Activated T-helper 2 cell treated with anti-CD3 and anti-CD28 coated beads, Interferon-gamma antibody, Interleukin-2, Interleukin-4, amounts not matched to agents 10 μg/mL and 5 μg/mL and 100 μg/mL, durations not matched to agents 14 hours and 24 hours and 36 hours (primary cell): ENCODE measurements at regions of chr3 and their contacts with region 1.

Region 1: DNA sequence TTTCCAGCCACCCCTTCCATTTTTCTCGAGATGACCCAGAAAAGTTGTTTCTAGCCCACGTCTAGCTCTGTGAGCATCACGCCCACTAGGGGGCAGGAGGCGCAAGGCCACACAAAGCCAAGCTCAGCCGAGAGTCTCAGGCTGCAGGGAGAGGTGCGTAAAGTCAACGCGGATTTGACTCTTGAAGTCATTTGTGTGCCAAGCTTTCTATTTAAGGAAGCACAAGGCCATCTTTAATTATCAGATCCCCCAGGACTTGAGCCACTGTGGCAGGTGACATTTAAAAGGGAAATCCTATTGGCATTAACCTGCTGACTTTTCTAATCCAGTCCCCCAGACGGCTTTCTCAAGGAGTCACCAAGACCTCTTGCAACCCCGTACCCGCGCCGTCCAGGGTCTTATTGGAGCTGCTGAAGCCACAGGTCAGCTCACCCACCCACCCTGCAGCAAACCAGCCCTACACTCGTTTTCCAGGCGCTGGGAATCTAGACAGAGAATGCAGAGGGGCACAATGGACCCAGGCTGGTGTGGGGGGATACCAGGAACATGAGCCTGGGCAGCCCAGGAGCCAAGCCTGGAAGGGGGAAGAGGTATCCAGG is 62.1 kb downstream of the CAPN7 start:
- DNase-seq: peak; percentile 75
- H3K4me3 Mint-ChIP-seq: no peak overlapping the region
- H3K27ac Mint-ChIP-seq: no peak overlapping the region
- H3K4me1 Mint-ChIP-seq: peaks cover 41% of the 10 kb centered on the region
- H3K27me3 Mint-ChIP-seq: no peaks in the 10 kb centered on the region

Region 2: GRCh38 chr3:15241341-15241740 is 26.8 kb before region 1 on chr3:
- intact Hi-C with region 1: no loop called
- DNase-seq: no peak
- H3K4me3 Mint-ChIP-seq: no peak overlapping the region
- H3K27ac Mint-ChIP-seq: no peak overlapping the region
- H3K4me1 Mint-ChIP-seq: peaks cover 10% of the 10 kb centered on the region
- H3K27me3 Mint-ChIP-seq: no peaks in the 10 kb centered on the region

Region 3: GRCh38 chr3:15291589-15292541 is 23.7 kb after region 1 on chr3:
- intact Hi-C with region 1: loop called (anchors 1 kb)
- DNase-seq: peak; percentile 69
- H3K4me3 Mint-ChIP-seq: peak overlapping the region; percentile 31
- H3K27ac Mint-ChIP-seq: peak overlapping the region; percentile 74
- H3K4me1 Mint-ChIP-seq: peaks cover 50% of the 10 kb centered on the region
- H3K27me3 Mint-ChIP-seq: no peaks in the 10 kb centered on the region

Region 4: GRCh38 chr3:15332405-15333098 is 64.4 kb after region 1 on chr3 and contains the start of gene SH3BP5:
- intact Hi-C with region 1: loop called (anchors 1 kb)
- DNase-seq: peak; percentile 68
- H3K4me3 Mint-ChIP-seq: peak within 1 kb of the TSS; percentile 90
- H3K27ac Mint-ChIP-seq: peak within 1 kb of the TSS; percentile 77
- H3K4me1 Mint-ChIP-seq: peaks cover 45% of the 10 kb centered on the region
- H3K27me3 Mint-ChIP-seq: peaks cover 2% of the 10 kb centered on the region
- total RNA-seq, gene SH3BP5: 14.8 and 15.0 TPM in 2 replicates

Region 5: DNA sequence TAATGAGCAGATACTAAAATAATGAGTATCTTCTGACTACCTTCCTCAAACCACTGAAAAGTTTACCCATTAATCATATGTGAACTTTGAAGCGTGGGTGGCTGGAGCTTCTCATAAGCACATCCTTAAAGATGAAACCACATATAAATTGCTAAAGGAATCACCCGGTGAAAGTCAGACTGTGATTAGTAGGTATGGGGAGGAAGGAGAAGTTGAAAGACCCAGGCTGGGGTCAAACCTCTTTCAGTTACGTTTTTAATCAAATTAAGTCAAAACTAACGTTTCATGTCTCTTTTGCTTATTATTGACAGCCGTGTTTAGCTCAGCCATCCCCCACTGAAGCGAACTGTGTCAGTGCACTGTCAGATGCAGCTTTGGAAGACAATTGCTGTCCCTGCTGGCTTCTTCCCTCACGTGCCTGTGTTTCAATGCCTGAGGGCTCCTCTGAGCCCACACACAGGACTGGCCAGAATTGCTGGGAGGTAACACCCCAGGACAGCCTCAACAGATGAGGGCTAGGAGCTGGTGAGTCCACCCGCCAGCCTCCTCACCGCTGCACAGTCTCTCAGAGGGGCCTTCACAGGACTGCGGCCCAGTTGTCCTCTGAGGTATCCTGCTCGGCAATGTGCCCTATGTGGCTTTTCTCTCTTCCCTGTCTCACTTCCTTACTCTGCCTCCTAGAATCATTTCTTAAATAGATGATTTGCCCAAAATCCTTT is 93.5 kb after region 1 on chr3:
- intact Hi-C with region 1: loop called (anchors 1 kb)
- DNase-seq: peak; percentile 36
- H3K4me3 Mint-ChIP-seq: peak overlapping the region; percentile 30
- H3K27ac Mint-ChIP-seq: peak overlapping the region; percentile 81
- H3K4me1 Mint-ChIP-seq: peaks cover 36% of the 10 kb centered on the region
- H3K27me3 Mint-ChIP-seq: no peaks in the 10 kb centered on the region

Region 6: DNA sequence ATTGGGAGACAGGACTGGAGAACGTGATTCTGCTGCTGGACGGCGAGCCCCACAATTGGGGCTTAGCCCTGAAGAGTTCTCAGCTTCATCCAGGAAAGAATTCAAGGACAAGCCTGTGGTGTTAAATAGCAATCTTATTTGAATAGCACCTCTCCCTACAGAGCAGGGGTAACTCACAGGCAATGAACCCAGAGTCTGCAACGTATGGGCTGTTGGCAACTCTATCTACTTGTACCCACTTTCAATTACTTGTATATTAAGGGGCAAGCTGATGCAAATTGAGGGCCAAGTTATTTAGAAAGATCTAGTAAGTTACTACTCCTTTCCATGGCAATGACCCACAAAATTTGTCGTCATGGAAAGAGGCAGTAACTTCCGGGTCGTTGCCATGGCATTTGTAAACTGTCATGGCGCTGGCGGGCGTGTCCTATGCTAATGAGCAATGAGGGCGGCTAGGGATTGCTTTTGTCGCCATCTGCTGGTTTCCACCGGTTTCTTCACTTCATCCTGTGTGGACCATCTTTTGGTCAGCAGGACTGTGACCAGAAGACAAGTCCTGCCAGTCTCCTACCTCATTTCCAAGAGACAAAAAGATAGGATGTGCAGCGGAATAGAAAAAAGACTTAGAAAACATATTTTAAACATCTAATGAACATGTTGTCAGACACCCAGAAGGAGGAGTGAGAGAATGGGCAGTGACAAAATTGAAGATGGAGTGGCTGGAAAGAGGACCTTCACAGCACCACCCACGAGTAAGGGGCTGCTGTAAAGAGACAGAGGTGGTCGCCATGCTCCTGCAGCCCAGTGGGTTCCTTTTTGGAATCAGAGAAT is 110.0 kb after region 1 on chr3:
- intact Hi-C with region 1: loop called (anchors 1 kb)
- DNase-seq: peak; percentile 92
- H3K4me3 Mint-ChIP-seq: no peak overlapping the region
- H3K27ac Mint-ChIP-seq: peak overlapping the region; percentile 76
- H3K4me1 Mint-ChIP-seq: peaks cover 10% of the 10 kb centered on the region
- H3K27me3 Mint-ChIP-seq: no peaks in the 10 kb centered on the region

Region 7: DNA sequence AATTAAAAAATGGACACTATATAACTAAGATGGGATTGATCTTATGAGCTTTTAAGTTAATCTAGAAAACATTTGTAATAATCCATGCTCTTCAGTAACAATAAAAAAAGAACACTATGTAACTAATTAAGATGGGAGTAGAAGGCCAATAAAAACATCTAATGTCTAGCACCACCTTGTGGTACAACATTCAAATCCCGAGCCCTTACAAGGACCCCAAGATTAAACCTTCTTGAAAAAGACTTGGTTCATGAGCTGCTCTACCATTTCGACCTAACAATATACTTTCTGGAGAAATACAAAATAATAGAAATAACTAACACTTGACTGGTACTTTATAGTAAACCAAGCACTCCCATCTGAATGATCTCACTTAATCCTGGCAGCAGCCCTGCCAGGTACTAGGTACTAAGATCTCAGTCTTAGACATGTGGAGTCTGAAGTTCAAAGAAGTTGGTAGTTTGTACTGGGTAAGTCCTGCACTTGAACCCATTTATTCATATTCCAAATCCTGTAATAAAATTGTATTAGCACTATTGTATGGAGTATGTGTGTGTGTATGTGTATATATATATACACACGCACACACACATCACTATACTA is 137.4 kb after region 1 on chr3:
- intact Hi-C with region 1: loop called (anchors 1 kb)
- DNase-seq: no peak
- H3K4me3 Mint-ChIP-seq: no peak overlapping the region
- H3K27ac Mint-ChIP-seq: no peak overlapping the region
- H3K4me1 Mint-ChIP-seq: peaks cover 5% of the 10 kb centered on the region
- H3K27me3 Mint-ChIP-seq: no peaks in the 10 kb centered on the region